HCT116 (cell line): ENCODE measurements at regions of chr18 and their contacts with region 1.

Region 1: GRCh38 chr18:46073474-46074331 is 1.6 kb upstream of the PSTPIP2 start:
- DNase-seq: peak; percentile 51
- ATAC-seq: peak; percentile 41
- H3K4me3 ChIP-seq: no peak overlapping the region
- H3K27ac ChIP-seq: no peak overlapping the region
- H3K4me1 ChIP-seq: peaks cover 18 to 38% of the 10 kb centered on the region in 2 experiments
- H3K27me3 ChIP-seq: no peaks in the 10 kb centered on the region
- CTCF ChIP-seq: peak; percentile 48 to 68 (median 58); a peak in 5 of 6 replicates
- POLR2A ChIP-seq: no peak
- RAD21 ChIP-seq: peak; percentile 78

Region 2: DNA sequence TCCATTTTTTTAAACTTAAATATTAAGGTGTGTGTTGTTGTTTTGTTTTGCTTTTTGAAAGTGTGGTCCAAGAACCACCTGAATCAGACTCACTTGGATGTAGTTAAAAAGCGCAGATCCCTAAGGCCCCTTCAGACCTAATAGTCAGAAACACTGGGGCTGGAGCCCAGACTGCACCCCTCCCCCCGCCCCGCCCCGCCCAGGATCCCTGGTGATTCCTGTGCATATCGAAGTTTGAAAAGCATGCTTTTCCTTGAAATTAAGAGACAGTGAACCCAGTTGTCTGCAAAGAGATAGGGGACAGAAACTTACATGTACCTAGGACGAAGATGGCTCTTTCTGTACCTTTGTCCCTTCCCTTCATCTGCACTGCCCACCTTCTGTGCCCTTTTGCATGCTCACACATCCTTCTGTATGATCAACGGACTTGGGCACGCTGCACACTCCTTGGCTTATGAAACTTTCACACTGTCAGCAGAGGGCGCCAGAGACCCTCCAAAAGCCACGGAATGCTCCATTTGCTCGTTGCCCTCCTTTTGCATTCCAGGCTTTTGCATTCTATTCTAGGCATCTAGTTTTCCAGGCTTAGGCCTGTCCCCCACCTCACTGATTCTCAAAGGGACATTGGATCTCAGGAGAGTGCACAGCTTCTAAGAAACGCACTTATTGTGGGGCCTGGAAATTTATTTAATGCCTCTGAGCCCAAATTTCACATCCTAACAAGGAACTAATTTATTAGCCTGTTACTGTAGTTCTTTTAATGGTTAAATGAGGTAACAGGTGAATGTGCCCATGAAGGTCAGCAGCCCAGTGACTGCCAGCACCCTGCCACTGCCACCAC is 382.5 kb before region 1 on chr18:
- CTCF ChIA-PET with region 1: interaction called, 3 read pairs
- POLR2A ChIA-PET with region 1: no interaction called
- RAD21 ChIA-PET with region 1: no interaction called
- intact Hi-C with region 1: loop called (anchors 1 kb)
- DNase-seq: peak; percentile 62
- ATAC-seq: peak; percentile 98
- H3K4me3 ChIP-seq: no peak overlapping the region
- H3K27ac ChIP-seq: no peak overlapping the region
- H3K4me1 ChIP-seq: peaks cover 0 to 5% of the 10 kb centered on the region in 2 experiments; a peak in 1 of 4 replicates
- H3K27me3 ChIP-seq: no peaks in the 10 kb centered on the region
- CTCF ChIP-seq: peak; percentile 79 to 91 (median 84)
- POLR2A ChIP-seq: no peak
- RAD21 ChIP-seq: peak; percentile 93

Region 3: GRCh38 chr18:45920367-45920766 is 153.3 kb before region 1 on chr18:
- CTCF ChIA-PET with region 1: interaction called, 16 read pairs
- POLR2A ChIA-PET with region 1: no interaction called
- RAD21 ChIA-PET with region 1: interaction called in 1 of 2 experiments, 3 read pairs
- intact Hi-C with region 1: loop called (anchors 5 kb)
- DNase-seq: no peak
- ATAC-seq: no peak
- H3K4me3 ChIP-seq: no peak overlapping the region
- H3K27ac ChIP-seq: no peak overlapping the region
- H3K4me1 ChIP-seq: peaks cover 0 to 4% of the 10 kb centered on the region in 2 experiments; a peak in 1 of 4 replicates
- H3K27me3 ChIP-seq: no peaks in the 10 kb centered on the region
- CTCF ChIP-seq: no peak
- POLR2A ChIP-seq: no peak
- RAD21 ChIP-seq: no peak

Region 4: DNA sequence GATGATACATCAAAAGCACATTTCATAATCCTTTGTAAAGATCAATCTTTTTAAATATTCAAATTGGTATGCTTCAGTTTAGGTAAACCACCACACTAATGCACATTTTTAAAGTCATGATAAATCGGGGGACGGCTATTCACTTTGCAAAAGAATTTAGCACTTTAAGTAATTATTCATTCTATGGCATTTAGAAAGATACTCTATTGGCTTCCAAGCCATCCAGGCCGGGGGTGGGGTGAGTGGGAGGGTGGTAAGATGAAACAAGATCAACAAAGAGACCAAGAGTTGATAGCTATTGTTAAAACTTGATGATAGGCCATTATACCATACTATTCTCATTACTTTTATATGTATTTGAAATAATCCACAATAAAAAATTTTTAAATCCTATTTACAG is 147.6 kb before region 1 on chr18:
- CTCF ChIA-PET with region 1: interaction called, 16 read pairs
- POLR2A ChIA-PET with region 1: no interaction called
- RAD21 ChIA-PET with region 1: interaction called in 1 of 2 experiments, 3 read pairs
- intact Hi-C with region 1: loop called (anchors 5 kb)
- DNase-seq: no peak
- ATAC-seq: no peak
- H3K4me3 ChIP-seq: no peak overlapping the region
- H3K27ac ChIP-seq: no peak overlapping the region
- H3K4me1 ChIP-seq: no peaks in the 10 kb centered on the region
- H3K27me3 ChIP-seq: no peaks in the 10 kb centered on the region
- CTCF ChIP-seq: no peak
- POLR2A ChIP-seq: no peak
- RAD21 ChIP-seq: no peak

Region 5: GRCh38 chr18:46320928-46321711 is 247.4 kb after region 1 on chr18:
- CTCF ChIA-PET with region 1: no interaction called
- POLR2A ChIA-PET with region 1: no interaction called
- RAD21 ChIA-PET with region 1: no interaction called
- intact Hi-C with region 1: no loop called
- DNase-seq: no peak
- ATAC-seq: no peak
- H3K4me3 ChIP-seq: no peak overlapping the region
- H3K27ac ChIP-seq: no peak overlapping the region
- H3K4me1 ChIP-seq: peaks cover 24 to 37% of the 10 kb centered on the region in 2 experiments
- H3K27me3 ChIP-seq: no peaks in the 10 kb centered on the region
- CTCF ChIP-seq: no peak
- POLR2A ChIP-seq: no peak
- RAD21 ChIP-seq: no peak